HCT116 (cell line): ENCODE measurements at regions of chr3 and their contacts with region 1.

Region 1: DNA sequence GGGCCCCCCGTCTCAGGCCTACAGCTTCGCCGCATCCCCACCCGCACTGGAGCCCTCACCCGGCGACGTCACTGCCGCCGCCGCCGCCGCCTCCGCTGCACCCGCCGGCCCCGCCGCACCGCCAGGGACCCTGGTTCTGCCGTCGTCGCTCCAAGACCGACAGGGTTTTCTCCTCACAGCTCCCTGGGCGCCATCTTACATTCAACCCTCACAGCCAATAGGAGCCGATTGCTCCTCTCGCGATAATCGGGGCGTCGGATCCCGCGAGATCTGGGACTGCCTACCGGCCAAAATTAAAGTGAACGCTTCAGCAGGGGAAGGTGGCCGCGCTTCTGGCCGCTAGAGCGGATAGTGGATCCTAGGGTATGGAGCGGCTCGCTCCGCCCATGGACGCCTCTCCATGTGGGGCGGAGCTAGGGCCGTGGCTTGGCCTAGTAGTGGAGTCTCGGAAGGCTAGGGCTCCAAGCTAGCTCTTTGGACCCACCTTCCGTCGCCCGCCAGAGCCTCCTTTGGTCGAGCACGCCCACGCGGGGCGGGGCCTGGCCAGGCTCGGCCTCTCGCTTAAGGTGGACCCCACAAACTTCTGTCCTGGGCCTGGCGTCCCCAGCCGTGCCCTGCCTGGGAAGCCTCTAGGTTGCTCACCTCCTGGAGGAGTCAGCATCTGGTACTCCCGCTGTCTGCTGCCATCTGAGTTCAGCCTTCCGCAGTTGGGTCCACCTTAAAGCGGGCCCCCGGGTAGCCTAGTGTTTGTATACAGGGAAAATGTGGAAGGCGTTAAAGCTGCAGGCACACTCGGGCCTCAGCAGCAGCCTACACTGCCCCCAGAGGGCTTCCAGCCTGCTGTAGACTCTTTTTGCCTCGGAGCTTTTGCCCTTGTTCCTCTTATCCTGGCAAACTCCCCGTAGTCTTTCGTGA is at the start of gene QRICH1:
- DNase-seq: peak; percentile 97
- ATAC-seq: peak; percentile 83
- H3K4me3 ChIP-seq: peak within 1 kb of the TSS; percentile 69 to 75
- H3K27ac ChIP-seq: peak within 1 kb of the TSS; percentile 90
- H3K4me1 ChIP-seq: peaks cover 6 to 23% of the 10 kb centered on the region in 2 experiments; a peak in 3 of 4 replicates
- H3K27me3 ChIP-seq: no peaks in the 10 kb centered on the region
- CTCF ChIP-seq: peak in 2 of 3 experiments; percentile 73; a peak in 4 of 6 replicates
- POLR2A ChIP-seq: peak; percentile 71
- RAD21 ChIP-seq: no peak
- total RNA-seq, gene QRICH1: 105 TPM

Region 2: DNA sequence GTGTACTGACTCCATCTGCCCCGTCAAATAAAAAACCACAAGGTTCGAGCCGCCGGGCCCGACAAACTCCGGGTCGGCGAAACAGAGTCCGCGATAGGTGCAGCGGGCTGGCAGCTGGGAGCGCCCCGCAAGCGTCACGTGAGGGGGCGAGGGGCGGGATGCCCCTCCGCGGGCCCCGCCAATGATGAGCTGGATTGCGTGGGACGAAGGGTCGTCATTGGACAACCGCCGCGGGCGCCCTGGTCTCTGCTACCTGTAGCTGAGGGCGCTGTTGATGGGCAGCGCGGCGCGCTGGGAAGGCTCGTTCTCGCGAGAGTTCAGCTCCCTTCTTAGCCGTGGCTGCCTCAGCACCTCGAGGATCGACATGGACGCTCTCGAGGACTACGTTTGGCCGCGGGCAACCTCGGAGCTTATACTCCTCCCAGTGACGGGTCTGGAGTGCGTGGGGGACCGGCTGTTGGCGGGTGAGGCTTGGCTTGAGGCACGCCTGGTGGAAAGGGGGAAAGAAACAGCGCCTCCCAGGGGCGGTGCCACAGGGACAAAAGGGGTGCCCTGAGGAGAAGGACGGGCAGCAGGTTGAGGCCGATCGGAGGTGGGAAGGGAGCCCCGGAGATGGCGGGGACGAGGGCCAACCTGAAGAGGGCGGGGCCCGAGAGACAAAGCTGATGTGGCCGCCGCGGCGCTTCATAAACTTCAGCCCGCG is 86.9 kb before region 1 on chr3 and contains the start of gene WDR6:
- CTCF ChIA-PET with region 1: interaction called, 8 read pairs
- POLR2A ChIA-PET with region 1: interaction called, 13 read pairs
- RAD21 ChIA-PET with region 1: interaction called in 1 of 2 experiments, 8 read pairs
- intact Hi-C with region 1: no loop called
- DNase-seq: peak; percentile 94
- ATAC-seq: peak; percentile 91
- H3K4me3 ChIP-seq: peak within 1 kb of the TSS; percentile 72 to 86
- H3K27ac ChIP-seq: peak within 1 kb of the TSS; percentile 99
- H3K4me1 ChIP-seq: peaks cover 3 to 26% of the 10 kb centered on the region in 2 experiments; a peak in 3 of 4 replicates
- H3K27me3 ChIP-seq: no peaks in the 10 kb centered on the region
- CTCF ChIP-seq: peak in 2 of 3 experiments; percentile 44 to 61; a peak in 3 of 6 replicates
- POLR2A ChIP-seq: peak; percentile 74
- RAD21 ChIP-seq: no peak
- total RNA-seq, gene WDR6: 174 TPM

Region 3: GRCh38 chr3:49021813-49022687 is 72.1 kb before region 1 on chr3 and contains the start of gene NDUFAF3:
- CTCF ChIA-PET with region 1: interaction called, 29 read pairs
- POLR2A ChIA-PET with region 1: interaction called, 36 read pairs
- RAD21 ChIA-PET with region 1: interaction called in 1 of 2 experiments, 3 read pairs
- intact Hi-C with region 1: loop called (anchors 1 kb)
- DNase-seq: peak; percentile 90
- ATAC-seq: peak; percentile 66
- H3K4me3 ChIP-seq: peak within 1 kb of the TSS; percentile 80 to 98
- H3K27ac ChIP-seq: peak within 1 kb of the TSS; percentile 99
- H3K4me1 ChIP-seq: peaks cover 17 to 62% of the 10 kb centered on the region in 2 experiments
- H3K27me3 ChIP-seq: no peaks in the 10 kb centered on the region
- CTCF ChIP-seq: peak in 2 of 3 experiments; percentile 82 to 92; a peak in 4 of 6 replicates
- POLR2A ChIP-seq: peak; percentile 72
- RAD21 ChIP-seq: no peak
- total RNA-seq, gene NDUFAF3: 91.0 TPM

Region 4: DNA sequence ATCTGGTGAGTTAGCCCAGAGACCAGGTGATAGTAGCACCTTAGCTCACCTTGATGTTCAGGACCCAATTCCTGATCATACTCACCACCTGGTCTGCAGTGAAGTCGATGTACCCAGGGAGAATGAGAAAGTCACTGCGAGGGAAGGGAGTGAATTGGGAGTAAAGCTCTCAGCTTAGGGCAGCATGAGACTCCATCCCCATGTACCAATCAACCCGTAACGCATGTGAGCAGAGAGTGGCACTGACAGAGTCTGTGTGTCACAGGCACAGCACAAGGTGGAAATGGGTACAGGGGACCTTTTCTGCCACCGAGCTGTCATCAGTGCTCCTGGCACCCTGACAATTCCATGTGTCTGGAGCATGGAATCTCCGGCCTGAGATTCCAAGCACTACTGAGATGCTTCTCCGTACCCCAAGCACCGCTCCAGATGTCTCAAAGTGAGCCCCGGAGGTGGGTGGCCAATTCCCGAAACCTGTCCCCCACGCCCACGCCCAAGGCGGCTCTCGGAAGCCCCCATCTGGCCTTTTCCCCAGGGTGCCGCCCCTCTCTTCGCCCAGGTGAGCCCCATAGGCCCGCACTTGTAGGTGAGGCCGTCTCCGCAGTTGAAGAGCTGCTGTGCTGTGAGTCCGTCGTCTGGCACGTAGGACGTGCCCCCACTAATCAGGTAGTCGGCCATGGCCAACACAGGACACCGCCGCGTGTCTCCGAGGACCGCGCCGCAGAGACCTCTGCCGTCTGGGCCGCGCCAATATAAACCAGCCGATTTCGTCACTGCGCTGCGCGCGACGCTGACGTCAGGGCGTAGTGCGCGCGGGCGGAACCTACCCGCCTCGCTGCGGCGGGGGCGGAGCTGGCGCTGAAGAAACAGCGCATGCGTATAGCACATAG is 65.2 kb before region 1 on chr3 and contains the start of gene IMPDH2:
- CTCF ChIA-PET with region 1: interaction called, 3 read pairs
- POLR2A ChIA-PET with region 1: interaction called, 22 read pairs
- RAD21 ChIA-PET with region 1: no interaction called
- intact Hi-C with region 1: loop called (anchors 2 kb)
- DNase-seq: peak; percentile 87
- ATAC-seq: peak; percentile 88
- H3K4me3 ChIP-seq: peak within 1 kb of the TSS; percentile 97
- H3K27ac ChIP-seq: peak within 1 kb of the TSS; percentile 68
- H3K4me1 ChIP-seq: peaks cover 3 to 38% of the 10 kb centered on the region in 2 experiments; a peak in 3 of 4 replicates
- H3K27me3 ChIP-seq: no peaks in the 10 kb centered on the region
- CTCF ChIP-seq: no peak
- POLR2A ChIP-seq: peak; percentile 99
- RAD21 ChIP-seq: no peak
- total RNA-seq, gene IMPDH2: 599 TPM

Region 5: DNA sequence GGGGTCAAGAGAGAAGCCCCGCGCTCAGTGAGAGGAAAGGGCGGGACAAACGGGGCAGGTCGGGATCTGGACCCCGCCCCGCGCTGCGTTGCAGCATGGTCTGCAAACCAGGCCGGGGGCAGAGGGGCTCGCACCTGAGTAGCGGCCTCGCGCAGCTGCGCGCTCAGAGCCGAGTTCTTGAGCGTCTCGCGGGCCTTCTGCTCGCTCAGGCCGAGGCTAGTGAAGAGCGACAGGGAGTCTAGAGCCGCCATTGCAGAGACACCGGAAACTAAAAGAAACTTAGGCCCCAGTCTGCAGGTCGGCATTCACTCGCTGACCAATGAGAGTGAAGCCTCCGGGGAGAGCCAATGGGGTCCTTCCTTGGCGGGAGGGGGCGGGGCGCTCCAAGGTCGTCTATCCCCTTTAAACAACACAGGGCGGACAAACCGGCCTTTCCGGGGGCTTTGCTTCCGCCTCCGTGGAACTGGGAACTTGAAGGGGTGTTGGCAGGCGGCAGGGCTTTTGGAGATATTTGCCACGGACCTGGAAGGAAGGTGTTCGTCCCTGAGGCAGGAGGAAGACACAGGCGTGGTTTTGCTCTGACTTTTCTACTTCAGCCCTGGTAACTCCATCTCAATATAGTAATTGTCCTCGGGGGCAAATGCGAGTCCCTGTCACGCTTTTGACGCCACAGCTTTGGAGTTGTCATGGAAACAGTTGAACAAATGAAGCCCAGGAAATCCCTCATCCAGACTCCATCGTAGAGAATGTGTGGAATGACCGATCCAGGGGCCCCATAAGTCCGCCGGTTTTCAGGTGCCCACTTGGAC is 10.6 kb after region 1 on chr3 and contains the start of gene QARS1:
- CTCF ChIA-PET with region 1: interaction called, 6 read pairs
- POLR2A ChIA-PET with region 1: interaction called, 11 read pairs
- RAD21 ChIA-PET with region 1: interaction called in 1 of 2 experiments, 3 read pairs
- intact Hi-C with region 1: no loop called
- DNase-seq: peak; percentile 78
- ATAC-seq: peak; percentile 96
- H3K4me3 ChIP-seq: peak within 1 kb of the TSS; percentile 93 to 97
- H3K27ac ChIP-seq: peak within 1 kb of the TSS; percentile 79
- H3K4me1 ChIP-seq: peaks cover 9 to 20% of the 10 kb centered on the region in 2 experiments; a peak in 3 of 4 replicates
- H3K27me3 ChIP-seq: no peaks in the 10 kb centered on the region
- CTCF ChIP-seq: no peak
- POLR2A ChIP-seq: peak; percentile 53
- RAD21 ChIP-seq: no peak
- total RNA-seq, gene QARS1: 346 TPM

Region 6: DNA sequence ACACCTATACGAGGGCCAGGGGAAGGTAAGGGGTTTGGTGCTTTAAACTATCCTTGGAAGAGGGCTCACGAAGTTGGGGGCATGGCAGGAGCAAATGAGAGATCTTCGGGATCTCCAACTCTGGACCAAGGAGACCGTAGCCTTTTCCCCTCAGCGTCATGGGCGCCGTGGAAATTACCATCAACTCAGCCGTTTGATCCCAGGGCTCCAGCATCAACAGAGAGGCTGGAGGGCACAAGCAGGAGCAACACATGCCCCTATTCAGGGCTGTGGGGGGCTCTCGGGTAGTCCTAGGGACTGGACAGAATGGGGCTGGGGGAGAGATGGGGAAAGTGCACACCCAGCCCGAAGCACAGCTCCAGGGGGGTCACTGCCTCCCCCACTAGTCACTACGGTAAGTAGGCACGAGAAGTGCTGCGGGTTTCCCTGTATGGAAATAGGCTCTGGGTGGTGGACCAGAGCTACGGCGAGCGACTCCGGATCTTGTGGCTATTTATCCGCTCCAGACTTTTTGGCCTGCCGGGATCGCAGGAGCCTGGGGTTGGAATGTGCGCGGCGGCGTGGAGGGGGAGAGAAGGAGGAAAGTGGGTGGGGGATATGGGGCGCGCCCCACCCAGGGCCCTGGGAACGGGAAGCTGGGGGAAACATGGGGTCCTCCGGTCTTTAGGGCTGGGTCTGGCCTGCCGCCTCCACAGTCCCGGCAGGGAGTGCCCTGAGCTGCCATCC is 39.3 kb after region 1 on chr3:
- CTCF ChIA-PET with region 1: interaction called, 13 read pairs
- POLR2A ChIA-PET with region 1: interaction called, 23 read pairs
- RAD21 ChIA-PET with region 1: no interaction called
- intact Hi-C with region 1: loop called (anchors 1 kb)
- DNase-seq: peak; percentile 74
- ATAC-seq: peak; percentile 76
- H3K4me3 ChIP-seq: peak overlapping the region; percentile 70 to 91
- H3K27ac ChIP-seq: peak overlapping the region; percentile 89
- H3K4me1 ChIP-seq: peaks cover 16 to 46% of the 10 kb centered on the region in 2 experiments
- H3K27me3 ChIP-seq: no peaks in the 10 kb centered on the region
- CTCF ChIP-seq: no peak
- POLR2A ChIP-seq: no peak
- RAD21 ChIP-seq: no peak